ENCODE measurements at regions of chr11 and their contacts with region 1.

Region 1: DNA sequence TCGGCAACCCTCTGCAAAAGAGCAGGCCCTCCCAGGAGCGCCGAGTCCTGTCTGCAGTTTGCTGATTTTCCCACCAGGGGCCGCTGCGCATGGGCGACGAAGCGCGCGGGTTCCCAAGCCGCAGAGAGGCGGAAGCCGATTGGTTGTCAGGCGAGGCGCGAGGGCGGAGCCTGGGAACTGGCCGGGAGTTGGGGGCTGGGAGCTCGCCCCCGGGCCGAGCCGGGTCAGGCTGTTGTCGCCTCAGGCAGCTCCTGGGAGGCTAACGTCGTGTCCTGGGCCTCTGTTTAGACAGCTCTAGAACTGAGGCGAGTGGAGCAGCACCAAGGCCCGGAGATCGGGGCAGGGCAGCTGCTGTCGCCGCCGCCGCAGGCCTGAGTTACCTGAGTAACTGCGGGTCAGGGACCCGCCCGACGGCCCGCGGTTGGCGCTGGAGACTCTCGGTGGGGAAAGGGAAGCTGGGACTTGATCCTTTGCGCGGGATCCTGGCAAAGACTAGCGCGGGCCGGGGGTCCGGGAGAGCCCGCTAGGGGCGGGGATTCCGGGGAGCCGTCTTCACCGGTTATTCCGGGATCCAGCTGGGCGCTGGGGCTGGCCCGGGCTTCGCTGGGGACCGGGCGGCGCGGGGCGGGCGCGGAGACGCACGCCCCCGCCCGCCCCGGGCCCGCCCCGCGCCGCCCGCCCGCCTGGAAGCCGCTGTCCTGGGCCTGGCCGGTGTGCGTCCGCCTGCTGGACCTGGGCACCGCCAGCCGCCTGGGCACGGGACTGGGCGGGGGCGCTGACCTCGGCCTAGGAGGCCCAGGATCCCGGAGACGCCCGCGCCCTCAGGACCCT is at the start of gene STIM1:
- DNase-seq: peak; percentile 94
- H3K4me3 ChIP-seq: peak within 1 kb of the TSS; percentile 33 to 88 (median 68)
- H3K27ac ChIP-seq: peak within 1 kb of the TSS; percentile 67
- H3K4me1 ChIP-seq: peaks cover 15% of the 10 kb centered on the region
- H3K27me3 ChIP-seq: no peaks in the 10 kb centered on the region
- CTCF ChIP-seq: peak; percentile 95 to 97
- POLR2A ChIP-seq: peak; percentile 49
- total RNA-seq, gene STIM1: 30.9 and 32.7 TPM in 2 replicates

Region 2: DNA sequence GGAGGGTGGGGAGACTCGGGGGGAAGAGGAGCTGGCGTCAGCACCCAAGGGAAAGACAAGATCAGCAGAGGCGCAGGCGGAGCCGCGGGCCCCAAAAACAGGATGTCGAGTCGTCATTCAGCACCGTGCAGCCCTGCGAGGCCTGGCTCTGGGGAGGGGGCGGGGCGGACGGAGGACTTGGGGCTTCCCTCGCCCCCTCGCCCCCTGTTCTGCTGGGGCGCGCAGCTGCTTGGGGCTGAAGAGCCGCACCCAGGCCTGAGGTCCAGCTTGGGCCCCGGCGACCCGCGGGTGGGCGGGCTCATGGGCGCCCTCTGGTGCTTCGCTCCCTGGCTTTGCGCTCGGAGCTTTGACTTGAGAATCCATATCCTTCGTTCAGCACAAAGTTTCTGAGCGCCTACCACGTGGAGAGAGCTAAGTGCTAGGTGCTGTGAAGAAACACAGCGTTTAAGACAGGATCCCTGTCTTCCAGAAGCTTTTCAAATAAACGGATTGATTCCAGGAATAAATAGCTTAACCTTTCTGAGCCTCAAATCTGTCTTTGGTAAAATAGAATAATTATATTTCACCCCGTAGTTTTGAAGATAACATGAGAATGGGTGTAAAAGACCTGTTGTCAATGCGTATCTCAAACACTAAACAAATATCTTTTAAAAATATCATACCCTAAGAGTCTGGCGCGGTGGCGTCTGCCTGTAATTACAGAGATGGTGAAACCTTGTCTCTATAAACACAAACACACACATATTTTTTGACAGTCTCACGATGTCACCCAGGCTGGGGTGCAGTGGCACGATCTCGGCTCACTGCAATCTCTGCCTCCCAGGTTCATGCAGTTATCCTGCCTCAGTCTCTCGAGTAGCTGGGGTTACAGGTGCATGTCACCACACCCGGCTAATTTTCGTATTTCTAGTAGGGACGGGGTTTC is 13.5 kb before region 1 on chr11:
- CTCF ChIA-PET with region 1: interaction called, 88 read pairs
- POLR2A ChIA-PET with region 1: interaction called, 7 read pairs
- dilution Hi-C with region 1: no loop called
- intact Hi-C with region 1: loop called (anchors 1 kb)
- DNase-seq: peak; percentile 91
- H3K4me3 ChIP-seq: peak overlapping the region; percentile 3 to 50 (median 31)
- H3K27ac ChIP-seq: peak overlapping the region; percentile 55
- H3K4me1 ChIP-seq: peaks cover 29% of the 10 kb centered on the region
- H3K27me3 ChIP-seq: no peaks in the 10 kb centered on the region
- CTCF ChIP-seq: peak; percentile 72 to 95
- POLR2A ChIP-seq: peak; percentile 18

Region 3: GRCh38 chr11:3885855-3886254 is 30.7 kb after region 1 on chr11:
- CTCF ChIA-PET with region 1: interaction called, 13 read pairs
- POLR2A ChIA-PET with region 1: no interaction called
- dilution Hi-C with region 1: no loop called
- intact Hi-C with region 1: no loop called
- DNase-seq: peak; percentile 46
- H3K4me3 ChIP-seq: peak overlapping the region in 1 of 3 experiments; percentile 12
- H3K27ac ChIP-seq: no peak overlapping the region
- H3K4me1 ChIP-seq: peaks cover 14% of the 10 kb centered on the region
- H3K27me3 ChIP-seq: no peaks in the 10 kb centered on the region
- CTCF ChIP-seq: no peak
- POLR2A ChIP-seq: no peak

Region 4: GRCh38 chr11:3927133-3927796 is 72.1 kb after region 1 on chr11:
- CTCF ChIA-PET with region 1: interaction called, 31 read pairs
- POLR2A ChIA-PET with region 1: no interaction called
- dilution Hi-C with region 1: no loop called
- intact Hi-C with region 1: no loop called
- DNase-seq: no peak
- H3K4me3 ChIP-seq: no peak overlapping the region
- H3K27ac ChIP-seq: no peak overlapping the region
- H3K4me1 ChIP-seq: no peaks in the 10 kb centered on the region
- H3K27me3 ChIP-seq: no peaks in the 10 kb centered on the region
- CTCF ChIP-seq: no peak
- POLR2A ChIP-seq: no peak

Region 5: GRCh38 chr11:3984896-3985295 is 129.7 kb after region 1 on chr11:
- CTCF ChIA-PET with region 1: interaction called, 29 read pairs
- POLR2A ChIA-PET with region 1: no interaction called
- dilution Hi-C with region 1: no loop called
- intact Hi-C with region 1: no loop called
- DNase-seq: peak; percentile 55
- H3K4me3 ChIP-seq: no peak overlapping the region
- H3K27ac ChIP-seq: no peak overlapping the region
- H3K4me1 ChIP-seq: no peaks in the 10 kb centered on the region
- H3K27me3 ChIP-seq: no peaks in the 10 kb centered on the region
- CTCF ChIP-seq: peak in 1 of 2 donors; percentile 5
- POLR2A ChIP-seq: no peak

Region 6: DNA sequence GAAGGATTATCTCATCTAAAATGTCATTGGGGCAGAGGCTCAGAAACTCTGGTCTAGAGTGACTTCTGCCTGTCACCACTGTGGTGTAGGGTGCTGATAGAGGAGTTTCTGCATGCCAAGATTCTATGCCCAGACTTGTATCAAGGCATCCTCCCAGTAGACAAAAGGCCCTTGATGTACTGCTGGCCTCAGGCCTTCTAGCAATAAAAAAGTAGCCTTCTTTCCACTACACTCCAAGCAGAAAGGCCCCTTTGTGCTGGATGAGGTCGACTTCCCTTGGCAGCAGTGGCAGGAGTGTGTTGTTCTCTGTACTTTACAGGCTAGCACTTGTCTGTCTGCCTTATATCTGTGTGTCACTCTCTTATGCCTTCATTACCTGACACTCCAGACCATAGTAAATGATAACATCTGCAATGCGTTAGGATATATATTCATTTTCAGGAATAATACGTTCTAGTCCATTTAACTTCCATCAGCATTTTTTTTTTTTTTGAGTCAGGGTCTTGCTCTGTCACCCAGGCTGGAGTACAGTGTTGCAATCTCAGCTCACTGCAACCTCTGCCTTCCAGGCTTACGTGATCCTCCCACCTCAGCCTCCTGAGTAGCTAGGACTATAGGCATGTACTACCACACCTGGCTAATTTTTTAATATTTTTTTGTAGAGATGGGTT is 189.9 kb after region 1 on chr11:
- CTCF ChIA-PET with region 1: interaction called, 38 read pairs
- POLR2A ChIA-PET with region 1: no interaction called
- dilution Hi-C with region 1: loop called (anchors 25 kb)
- intact Hi-C with region 1: no loop called
- DNase-seq: peak; percentile 27
- H3K4me3 ChIP-seq: no peak overlapping the region
- H3K27ac ChIP-seq: no peak overlapping the region
- H3K4me1 ChIP-seq: peaks cover 3% of the 10 kb centered on the region
- H3K27me3 ChIP-seq: no peaks in the 10 kb centered on the region
- CTCF ChIP-seq: no peak
- POLR2A ChIP-seq: no peak

Measured in endothelial cell of umbilical vein (primary cell).